GM12878 (cell line): ENCODE measurements at regions of chr2 and their contacts with region 1.

Region 1: DNA sequence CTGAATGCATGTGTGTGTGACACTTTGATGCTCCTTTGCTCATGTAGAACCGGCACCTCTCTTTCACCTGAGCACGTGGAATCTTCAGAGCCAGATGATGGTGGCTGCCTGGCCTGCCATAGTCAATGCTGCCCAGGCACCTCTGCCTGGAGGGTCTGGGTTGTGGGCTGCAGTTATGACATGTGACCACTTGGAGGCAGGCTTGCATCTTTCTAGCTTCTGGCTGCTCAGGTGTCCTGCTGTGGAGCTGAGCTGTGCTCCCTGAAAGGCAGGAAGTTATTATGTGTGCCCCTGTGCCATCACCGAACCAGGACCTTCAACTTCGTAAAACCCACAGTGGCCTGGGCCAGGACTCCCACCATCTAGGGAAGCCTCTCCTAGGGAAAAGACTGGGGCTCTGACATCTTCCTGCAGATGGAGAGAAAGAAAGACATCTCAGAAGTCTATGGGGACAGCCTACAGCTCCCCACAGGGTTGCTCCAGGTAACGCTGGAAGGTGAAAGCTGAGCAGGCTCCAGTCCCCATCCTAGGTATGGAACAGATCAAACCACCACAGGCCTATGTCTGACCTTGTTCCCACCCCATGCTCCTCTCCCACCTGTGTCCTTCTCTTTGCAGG is 30.2 kb downstream of the PSD4 start:
- DNase-seq: peak; percentile 30
- ATAC-seq: peak; percentile 88
- H3K4me3 ChIP-seq: no peak overlapping the region
- H3K27ac ChIP-seq: no peak overlapping the region
- H3K4me1 ChIP-seq: no peaks in the 10 kb centered on the region
- H3K27me3 ChIP-seq: no peaks in the 10 kb centered on the region
- CTCF ChIP-seq: peak; percentile 84 to 90 (median 89)
- EP300 ChIP-seq: no peak
- POLR2A ChIP-seq: peak; percentile 58
- RAD21 ChIP-seq: peak; percentile 71

Region 2: GRCh38 chr2:113080134-113080533 is 123.9 kb before region 1 on chr2:
- CTCF ChIA-PET with region 1: interaction called, 36 read pairs
- POLR2A ChIA-PET with region 1: no interaction called
- RAD21 ChIA-PET with region 1: interaction called, 9 read pairs
- SMC1A ChIA-PET with region 1: interaction called, 8 read pairs
- in situ Hi-C with region 1: no loop called
- intact Hi-C with region 1: loop called (anchors 2 kb)
- DNase-seq: no peak
- ATAC-seq: peak; percentile 88
- H3K4me3 ChIP-seq: no peak overlapping the region
- H3K27ac ChIP-seq: no peak overlapping the region
- H3K4me1 ChIP-seq: no peaks in the 10 kb centered on the region
- H3K27me3 ChIP-seq: no peaks in the 10 kb centered on the region; a peak in 1 of 4 replicates
- CTCF ChIP-seq: peak; percentile 86 to 89 (median 87)
- EP300 ChIP-seq: no peak
- POLR2A ChIP-seq: no peak
- RAD21 ChIP-seq: peak; percentile 82

Region 3: GRCh38 chr2:113173542-113174395 is 30.2 kb before region 1 on chr2 and contains the start of gene PSD4:
- CTCF ChIA-PET with region 1: interaction called, 106 read pairs
- POLR2A ChIA-PET with region 1: interaction called, 11 read pairs
- RAD21 ChIA-PET with region 1: interaction called, 22 read pairs
- SMC1A ChIA-PET with region 1: interaction called, 21 read pairs
- in situ Hi-C with region 1: no loop called
- intact Hi-C with region 1: no loop called
- DNase-seq: peak; percentile 67
- ATAC-seq: peak; percentile 87
- H3K4me3 ChIP-seq: peak within 1 kb of the TSS; percentile 95
- H3K27ac ChIP-seq: peak within 1 kb of the TSS; percentile 96
- H3K4me1 ChIP-seq: peaks cover 32% of the 10 kb centered on the region
- H3K27me3 ChIP-seq: no peaks in the 10 kb centered on the region
- CTCF ChIP-seq: 0 out of 6 replicates have a peak, but pooled peaks of 1 of the 3 experiments have one; percentile 12
- EP300 ChIP-seq: no peak
- POLR2A ChIP-seq: peak; percentile 96
- RAD21 ChIP-seq: no peak
- polyA plus RNA-seq, gene PSD4: 0.68 to 1.7 TPM

Region 4: DNA sequence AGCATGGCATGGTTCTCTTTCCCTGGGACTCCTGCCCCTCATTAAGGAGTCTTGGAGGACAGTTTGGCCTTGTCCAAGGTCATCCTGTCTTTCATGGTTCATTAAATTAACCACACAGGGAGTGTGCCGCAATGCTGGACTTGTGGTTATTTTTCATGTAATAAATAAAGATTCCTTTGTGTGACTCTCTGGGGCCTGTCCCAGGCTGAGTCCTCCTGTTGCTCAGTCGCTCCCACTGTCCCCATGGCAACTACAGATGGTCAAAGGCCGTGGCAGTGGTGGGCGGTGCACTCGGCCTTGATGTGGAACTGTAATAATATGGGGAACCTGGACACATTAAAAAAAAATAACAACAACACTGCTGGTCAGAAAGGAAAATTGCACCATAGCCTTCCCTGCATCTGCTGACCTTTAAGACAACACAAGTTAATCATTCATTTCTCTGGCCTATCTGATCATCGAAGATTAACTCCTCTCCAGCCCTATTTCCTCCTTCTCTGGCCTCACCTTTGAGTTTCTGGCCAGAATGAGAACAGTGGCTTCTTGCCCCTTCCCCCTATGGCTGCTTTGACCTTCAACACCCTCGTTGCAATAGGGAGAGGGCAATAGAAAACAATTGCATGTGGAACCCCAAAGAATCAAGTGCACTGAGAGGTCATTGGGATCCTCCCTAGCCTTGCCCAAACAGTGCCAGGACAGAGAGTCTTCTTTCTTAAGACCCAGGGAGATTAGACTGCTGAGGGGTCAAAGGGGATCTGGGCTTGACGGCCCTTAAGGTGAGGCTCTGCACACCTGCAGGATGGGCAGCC is 14.5 kb after region 1 on chr2:
- CTCF ChIA-PET with region 1: interaction called, 20 read pairs
- POLR2A ChIA-PET with region 1: interaction called, 3 read pairs
- RAD21 ChIA-PET with region 1: interaction called, 4 read pairs
- SMC1A ChIA-PET with region 1: interaction called, 11 read pairs
- in situ Hi-C with region 1: no loop called
- intact Hi-C with region 1: no loop called
- DNase-seq: no peak
- ATAC-seq: no peak
- H3K4me3 ChIP-seq: no peak overlapping the region
- H3K27ac ChIP-seq: no peak overlapping the region
- H3K4me1 ChIP-seq: peaks cover 5% of the 10 kb centered on the region; the same call in 1 of the 2 replicates
- H3K27me3 ChIP-seq: no peaks in the 10 kb centered on the region
- CTCF ChIP-seq: no peak
- EP300 ChIP-seq: no peak
- POLR2A ChIP-seq: no peak
- RAD21 ChIP-seq: no peak

Region 5: GRCh38 chr2:113233593-113234550 is 29.9 kb after region 1 on chr2:
- CTCF ChIA-PET with region 1: interaction called, 14 read pairs
- POLR2A ChIA-PET with region 1: no interaction called
- RAD21 ChIA-PET with region 1: interaction called, 7 read pairs
- SMC1A ChIA-PET with region 1: interaction called, 6 read pairs
- in situ Hi-C with region 1: no loop called
- intact Hi-C with region 1: no loop called
- DNase-seq: no peak
- ATAC-seq: peak; percentile 63
- H3K4me3 ChIP-seq: no peak overlapping the region
- H3K27ac ChIP-seq: no peak overlapping the region
- H3K4me1 ChIP-seq: peaks cover 2% of the 10 kb centered on the region; the same call in 1 of the 2 replicates
- H3K27me3 ChIP-seq: no peaks in the 10 kb centered on the region; a peak in 2 of 4 replicates
- CTCF ChIP-seq: peak in 2 of 3 experiments; percentile 25 to 31; a peak in 2 of 6 replicates
- EP300 ChIP-seq: no peak
- POLR2A ChIP-seq: no peak
- RAD21 ChIP-seq: no peak

Region 6: DNA sequence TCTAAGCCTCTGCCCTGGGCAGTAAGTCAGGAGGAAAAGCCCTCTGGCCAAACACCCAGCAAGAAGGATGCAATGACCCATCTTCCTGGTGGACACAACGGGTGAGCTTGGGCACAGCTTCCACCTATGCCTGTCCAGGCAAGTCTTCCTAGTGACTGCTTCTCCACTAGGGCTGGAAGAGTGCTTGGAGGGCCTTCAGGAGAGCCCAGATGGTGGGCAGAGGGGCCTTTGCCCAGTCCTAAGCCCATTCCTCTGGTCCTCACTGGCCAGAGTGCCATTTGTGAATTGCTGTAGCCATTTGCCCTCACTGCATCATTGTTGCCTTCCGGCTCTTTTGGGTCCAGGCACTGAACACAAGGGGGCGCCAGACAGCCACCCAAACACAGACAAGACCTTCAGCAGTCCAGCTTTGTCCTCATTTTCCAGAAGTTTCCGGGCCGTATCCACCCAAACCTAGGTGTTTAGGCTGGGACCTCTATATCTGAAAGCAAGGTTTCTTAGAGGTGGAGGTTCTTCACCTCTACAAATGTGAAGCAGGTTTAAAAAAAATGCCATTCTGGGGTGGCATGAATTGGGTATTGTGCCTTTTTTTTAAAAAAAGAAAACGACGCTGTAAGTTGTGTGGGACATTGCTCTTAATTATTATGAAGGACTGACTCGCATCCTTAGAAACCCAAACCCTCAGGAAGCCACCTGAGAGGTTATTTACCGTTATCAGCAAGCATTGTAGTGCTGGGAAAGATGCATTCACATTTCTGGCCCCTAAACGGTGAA is 45.2 kb after region 1 on chr2:
- CTCF ChIA-PET with region 1: interaction called, 24 read pairs
- POLR2A ChIA-PET with region 1: no interaction called
- RAD21 ChIA-PET with region 1: interaction called, 6 read pairs
- SMC1A ChIA-PET with region 1: interaction called, 4 read pairs
- in situ Hi-C with region 1: no loop called
- intact Hi-C with region 1: no loop called
- DNase-seq: peak; percentile 23
- ATAC-seq: peak; percentile 95
- H3K4me3 ChIP-seq: no peak overlapping the region
- H3K27ac ChIP-seq: no peak overlapping the region
- H3K4me1 ChIP-seq: peaks cover 8% of the 10 kb centered on the region; the same call in 1 of the 2 replicates
- H3K27me3 ChIP-seq: no peaks in the 10 kb centered on the region
- CTCF ChIP-seq: peak; percentile 90 to 93 (median 92)
- EP300 ChIP-seq: no peak
- POLR2A ChIP-seq: no peak
- RAD21 ChIP-seq: peak; percentile 86